Naive thymus-derived CD4-positive, alpha-beta T cell (primary cell): ENCODE measurements at regions of chr2 and their contacts with region 1.

Region 1: GRCh38 chr2:201780674-201781581 is at the start of gene ALS2:
- DNase-seq: peak; percentile 91 to 97 (median 95)
- ATAC-seq: peak; percentile 96
- H3K4me3 ChIP-seq: peak within 1 kb of the TSS; percentile 96
- H3K4me3 Mint-ChIP-seq: peak within 1 kb of the TSS; percentile 87 to 99 (median 98)
- H3K27ac ChIP-seq: peak within 1 kb of the TSS; percentile 84
- H3K27ac Mint-ChIP-seq: peak within 1 kb of the TSS; percentile 84 to 99 (median 97)
- H3K4me1 ChIP-seq: peaks cover 7 to 10% of the 10 kb centered on the region in 2 donors
- H3K4me1 Mint-ChIP-seq: peaks cover 5 to 36% (median 21%) of the 10 kb centered on the region in 7 donors
- H3K27me3 ChIP-seq: no peaks in the 10 kb centered on the region
- H3K27me3 Mint-ChIP-seq: peaks cover 0 to 22% (median 0%) of the 10 kb centered on the region in 5 donors
- total RNA-seq, gene ALS2: 8.9 to 13.5 (median 10.7) TPM

Region 2: GRCh38 chr2:200888704-200889625 is 892.0 kb before region 1 on chr2 and contains the starts of genes NIF3L1 and PPIL3:
- CTCF ChIA-PET with region 1: no interaction called
- POLR2A ChIA-PET with region 1: no interaction called
- intact Hi-C with region 1: loop called in 1 of 2 experiments (anchors 2 kb)
- DNase-seq: peak; percentile 88 to 97 (median 95)
- ATAC-seq: peak; percentile 89
- H3K4me3 ChIP-seq: peak within 1 kb of the TSS; percentile 83
- H3K4me3 Mint-ChIP-seq: peak within 1 kb of the TSS; percentile 88 to 100 (median 96)
- H3K27ac ChIP-seq: peak within 1 kb of the TSS; percentile 86
- H3K27ac Mint-ChIP-seq: peak within 1 kb of the TSS; percentile 97 to 100 (median 100)
- H3K4me1 ChIP-seq: peaks cover 23 to 26% of the 10 kb centered on the region in 2 donors
- H3K4me1 Mint-ChIP-seq: peaks cover 35 to 75% (median 60%) of the 10 kb centered on the region in 7 donors
- H3K27me3 ChIP-seq: no peaks in the 10 kb centered on the region
- H3K27me3 Mint-ChIP-seq: no peaks in the 10 kb centered on the region
- total RNA-seq, gene NIF3L1: 11.5 to 33.9 (median 31.4) TPM
- total RNA-seq, gene PPIL3: 28.5 to 69.7 (median 49.1) TPM

Region 3: DNA sequence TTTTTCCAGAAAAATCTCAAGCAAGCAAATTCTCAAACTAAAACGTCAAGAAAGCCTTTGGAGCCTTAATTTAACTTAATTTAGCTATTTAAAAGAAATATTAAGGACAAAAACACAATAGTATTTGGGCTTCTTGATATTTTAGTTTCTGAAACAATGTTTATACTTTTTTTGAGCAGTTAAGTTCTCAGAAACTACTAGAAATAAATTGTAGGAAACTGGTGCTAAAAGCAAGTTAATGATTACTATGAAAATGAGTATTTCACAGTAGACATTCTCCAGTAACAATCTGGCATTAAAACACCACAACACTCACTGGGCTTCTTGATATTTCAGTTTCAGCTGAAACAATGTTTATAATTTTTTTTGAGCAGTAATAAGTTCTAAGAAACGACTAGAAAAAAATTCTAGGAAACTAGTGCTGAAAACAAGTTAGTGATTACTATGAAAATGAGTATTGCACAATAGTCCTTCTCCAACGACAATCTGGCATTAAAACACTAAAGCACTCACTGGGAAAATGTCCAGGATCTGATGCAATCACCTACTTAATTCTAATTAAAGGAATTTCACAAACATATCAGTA is 374.8 kb before region 1 on chr2:
- CTCF ChIA-PET with region 1: no interaction called
- POLR2A ChIA-PET with region 1: no interaction called
- intact Hi-C with region 1: no loop called
- DNase-seq: no peak
- ATAC-seq: no peak
- H3K4me3 ChIP-seq: no peak overlapping the region
- H3K4me3 Mint-ChIP-seq: peak overlapping the region in 4 of 10 donors; percentile 19 to 54 (median 22)
- H3K27ac ChIP-seq: peak overlapping the region; percentile 36
- H3K27ac Mint-ChIP-seq: peak overlapping the region in 5 of 9 donors; percentile 16 to 81 (median 28)
- H3K4me1 ChIP-seq: peaks cover 0 to 21% of the 10 kb centered on the region in 2 donors
- H3K4me1 Mint-ChIP-seq: peaks cover 13 to 61% (median 50%) of the 10 kb centered on the region in 7 donors
- H3K27me3 ChIP-seq: no peaks in the 10 kb centered on the region
- H3K27me3 Mint-ChIP-seq: no peaks in the 10 kb centered on the region

Region 4: DNA sequence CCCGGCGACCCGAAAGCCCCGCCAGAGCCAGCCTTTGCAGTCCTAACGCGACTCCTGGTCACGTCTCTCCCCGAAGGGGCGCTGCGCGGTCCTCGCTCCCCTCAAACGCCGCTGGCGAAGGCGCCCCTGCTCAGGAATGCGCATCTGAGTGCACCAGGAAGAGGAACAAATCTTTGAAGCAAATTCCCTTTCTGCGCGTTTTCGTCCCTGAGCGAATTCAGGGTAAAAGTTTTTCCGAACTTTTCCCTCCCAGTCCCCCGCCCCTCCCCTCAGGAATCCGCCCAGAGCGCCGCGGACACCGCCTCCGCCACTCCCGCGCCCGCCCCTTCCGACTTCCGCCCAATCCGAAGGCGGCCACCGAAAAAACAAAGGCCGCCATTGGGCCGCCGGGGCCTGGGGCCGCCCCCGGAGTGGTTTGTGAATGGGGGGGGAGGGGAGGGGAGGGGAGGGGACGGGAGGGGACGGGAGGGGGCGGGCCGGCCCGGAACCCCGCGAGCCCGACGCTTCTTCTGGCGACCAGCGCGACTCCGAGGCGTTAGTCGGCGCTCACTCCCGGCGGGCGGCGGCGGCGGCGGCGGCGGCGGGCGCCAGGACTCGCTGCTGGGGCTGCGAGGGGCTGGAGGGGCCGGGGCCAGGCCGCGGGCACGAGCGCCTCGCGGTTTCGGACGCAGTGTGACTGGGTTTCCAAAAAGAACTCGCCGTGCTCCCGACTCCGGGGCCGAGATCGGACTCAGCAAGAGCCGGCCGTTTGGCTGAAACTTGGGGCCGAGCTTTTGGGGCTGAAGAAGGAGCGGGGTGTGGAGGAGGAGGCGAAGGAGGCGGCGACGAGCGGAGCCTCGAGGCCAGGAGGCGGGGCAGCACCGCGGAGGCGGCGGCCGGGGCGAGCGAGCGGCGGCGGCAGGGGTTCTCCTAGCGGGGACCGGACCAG is 252.7 kb after region 1 on chr2 and contains the start of gene FZD7:
- CTCF ChIA-PET with region 1: no interaction called
- POLR2A ChIA-PET with region 1: no interaction called
- intact Hi-C with region 1: loop called (anchors 1 kb)
- DNase-seq: peak; percentile 70 to 87 (median 81)
- ATAC-seq: peak; percentile 92
- H3K4me3 ChIP-seq: peak within 1 kb of the TSS; percentile 91
- H3K4me3 Mint-ChIP-seq: peak within 1 kb of the TSS in 9 of 10 donors; percentile 87 to 96 (median 92)
- H3K27ac ChIP-seq: peak within 1 kb of the TSS; percentile 44
- H3K27ac Mint-ChIP-seq: peak within 1 kb of the TSS in 8 of 9 donors; percentile 46 to 83 (median 72)
- H3K4me1 ChIP-seq: peaks cover 9 to 11% of the 10 kb centered on the region in 2 donors
- H3K4me1 Mint-ChIP-seq: peaks cover 6 to 17% (median 14%) of the 10 kb centered on the region in 7 donors
- H3K27me3 ChIP-seq: peaks cover 6 to 22% of the 10 kb centered on the region in 2 donors
- H3K27me3 Mint-ChIP-seq: peaks cover 0 to 45% (median 7%) of the 10 kb centered on the region in 5 donors
- total RNA-seq, gene FZD7: 0.27 to 0.99 (median 0.43) TPM

Region 5: GRCh38 chr2:202115479-202115971 is 334.6 kb after region 1 on chr2:
- CTCF ChIA-PET with region 1: no interaction called
- POLR2A ChIA-PET with region 1: no interaction called
- intact Hi-C with region 1: no loop called
- DNase-seq: no peak
- ATAC-seq: no peak
- H3K4me3 ChIP-seq: no peak overlapping the region
- H3K4me3 Mint-ChIP-seq: no peak overlapping the region
- H3K27ac ChIP-seq: no peak overlapping the region
- H3K27ac Mint-ChIP-seq: no peak overlapping the region
- H3K4me1 ChIP-seq: no peaks in the 10 kb centered on the region
- H3K4me1 Mint-ChIP-seq: no peaks in the 10 kb centered on the region
- H3K27me3 ChIP-seq: no peaks in the 10 kb centered on the region
- H3K27me3 Mint-ChIP-seq: peaks cover 13 to 39% (median 22%) of the 10 kb centered on the region in 5 donors

Region 6: GRCh38 chr2:202238234-202239197 is 457.6 kb after region 1 on chr2 and contains the start of gene SUMO1:
- CTCF ChIA-PET with region 1: no interaction called
- POLR2A ChIA-PET with region 1: no interaction called
- intact Hi-C with region 1: loop called in 1 of 2 experiments (anchors 1 kb)
- DNase-seq: peak; percentile 80 to 95 (median 93)
- ATAC-seq: peak; percentile 98
- H3K4me3 ChIP-seq: peak within 1 kb of the TSS; percentile 82
- H3K4me3 Mint-ChIP-seq: peak within 1 kb of the TSS; percentile 91 to 100 (median 97)
- H3K27ac ChIP-seq: peak within 1 kb of the TSS; percentile 88
- H3K27ac Mint-ChIP-seq: peak within 1 kb of the TSS; percentile 96 to 99 (median 97)
- H3K4me1 ChIP-seq: peaks cover 11% of the 10 kb centered on the region in 2 donors
- H3K4me1 Mint-ChIP-seq: peaks cover 10 to 51% (median 35%) of the 10 kb centered on the region in 7 donors
- H3K27me3 ChIP-seq: no peaks in the 10 kb centered on the region
- H3K27me3 Mint-ChIP-seq: peaks cover 0 to 2% (median 0%) of the 10 kb centered on the region in 5 donors
- total RNA-seq, gene SUMO1: 48.1 to 104 (median 56.8) TPM

Region 7: DNA sequence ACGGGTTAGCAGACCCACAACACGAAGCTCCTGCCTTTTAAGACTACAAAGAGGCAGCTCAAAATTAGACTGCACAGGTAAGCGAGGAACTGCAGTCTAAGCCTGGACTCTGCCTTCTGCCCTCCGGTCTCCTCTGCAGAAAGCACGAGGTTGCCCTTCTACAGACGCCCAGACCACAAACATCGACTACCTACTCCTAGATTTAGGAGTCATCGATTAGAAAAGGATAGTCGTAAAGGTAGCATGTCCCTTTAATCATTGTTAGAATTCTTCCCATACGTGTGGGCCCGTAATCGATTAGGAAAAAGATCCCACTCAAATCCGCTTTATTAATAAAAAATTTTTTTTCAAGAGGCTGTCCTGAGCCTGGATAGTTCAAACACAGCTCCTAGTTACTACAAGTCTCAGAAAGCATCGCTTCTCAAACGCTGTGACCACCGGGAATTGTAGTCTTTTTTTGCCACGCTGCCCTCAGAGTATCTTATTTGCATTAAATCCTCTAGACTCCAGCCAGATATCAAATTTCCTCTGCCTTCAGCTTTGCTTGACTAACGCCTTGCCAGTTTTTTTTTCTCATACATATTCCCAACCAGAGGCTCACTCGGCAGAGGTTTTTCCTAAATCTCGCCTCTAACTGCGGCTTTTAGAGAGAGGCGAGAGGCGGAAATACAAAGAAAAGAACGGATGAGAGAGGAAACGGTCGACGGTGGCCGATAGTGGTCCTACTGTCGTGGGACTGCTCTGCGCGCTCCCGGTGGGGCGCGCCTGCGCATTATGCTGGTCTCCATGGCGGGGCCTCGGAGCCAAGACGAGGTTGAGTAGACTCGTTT is 1130.8 kb after region 1 on chr2 and contains the starts of genes CARF and WDR12:
- CTCF ChIA-PET with region 1: no interaction called
- POLR2A ChIA-PET with region 1: no interaction called
- intact Hi-C with region 1: loop called in 1 of 2 experiments (anchors 5 kb)
- DNase-seq: peak; percentile 81 to 93 (median 89)
- ATAC-seq: peak; percentile 93
- H3K4me3 ChIP-seq: peak within 1 kb of the TSS; percentile 82
- H3K4me3 Mint-ChIP-seq: peak within 1 kb of the TSS; percentile 90 to 100 (median 98)
- H3K27ac ChIP-seq: peak within 1 kb of the TSS; percentile 79
- H3K27ac Mint-ChIP-seq: peak within 1 kb of the TSS; percentile 93 to 99 (median 97)
- H3K4me1 ChIP-seq: peaks cover 4 to 11% of the 10 kb centered on the region in 2 donors
- H3K4me1 Mint-ChIP-seq: peaks cover 24 to 50% (median 34%) of the 10 kb centered on the region in 7 donors
- H3K27me3 ChIP-seq: no peaks in the 10 kb centered on the region
- H3K27me3 Mint-ChIP-seq: no peaks in the 10 kb centered on the region
- total RNA-seq, gene CARF: 10.2 to 31.2 (median 15.4) TPM
- total RNA-seq, gene WDR12: 17.2 to 50.4 (median 20.8) TPM

Region 8: DNA sequence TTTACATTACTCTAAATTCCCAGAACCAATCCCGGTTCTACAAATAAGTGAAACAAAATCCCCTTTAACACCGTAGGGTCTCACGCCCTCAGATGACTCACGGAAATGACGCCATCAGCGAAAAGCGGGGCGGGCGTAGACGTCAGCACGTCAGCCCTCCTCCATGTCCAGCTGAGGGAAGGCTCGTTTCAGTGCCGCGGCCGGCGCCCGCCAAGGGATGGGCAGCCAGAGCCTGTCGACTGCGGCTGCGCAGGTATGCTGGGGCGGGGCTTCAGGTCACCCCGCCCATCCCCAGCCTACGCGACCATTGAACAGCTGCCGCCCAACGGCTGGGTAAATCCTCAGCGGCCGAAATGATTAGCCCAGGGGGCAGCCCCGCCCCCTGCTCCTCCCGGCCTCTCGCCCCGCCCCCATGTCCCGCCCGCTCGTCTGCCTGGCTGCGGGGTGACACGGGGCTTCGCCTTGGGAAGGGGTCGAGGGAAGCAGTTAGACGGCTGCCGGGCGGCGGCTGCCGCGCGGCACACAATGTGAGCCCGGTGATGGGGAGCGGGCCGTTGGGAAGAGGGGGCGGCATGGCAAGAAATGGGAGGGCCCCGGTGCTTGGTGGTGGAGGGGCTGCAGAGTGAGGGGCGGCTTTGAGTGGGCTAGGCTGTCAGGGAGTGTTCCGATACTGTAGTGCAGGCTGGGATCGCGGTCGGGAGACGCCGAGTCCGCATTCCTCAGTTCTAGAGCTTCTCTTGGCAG is 1233.7 kb after region 1 on chr2 and contains the start of gene NBEAL1:
- CTCF ChIA-PET with region 1: no interaction called
- POLR2A ChIA-PET with region 1: no interaction called
- intact Hi-C with region 1: loop called in 1 of 2 experiments (anchors 2 kb)
- DNase-seq: peak; percentile 88 to 99 (median 90)
- ATAC-seq: peak; percentile 95
- H3K4me3 ChIP-seq: peak within 1 kb of the TSS; percentile 92
- H3K4me3 Mint-ChIP-seq: peak within 1 kb of the TSS; percentile 90 to 97 (median 95)
- H3K27ac ChIP-seq: peak within 1 kb of the TSS; percentile 92
- H3K27ac Mint-ChIP-seq: peak within 1 kb of the TSS; percentile 84 to 98 (median 94)
- H3K4me1 ChIP-seq: peaks cover 5 to 14% of the 10 kb centered on the region in 2 donors
- H3K4me1 Mint-ChIP-seq: peaks cover 18 to 48% (median 41%) of the 10 kb centered on the region in 7 donors
- H3K27me3 ChIP-seq: no peaks in the 10 kb centered on the region
- H3K27me3 Mint-ChIP-seq: peaks cover 0 to 19% (median 0%) of the 10 kb centered on the region in 5 donors
- total RNA-seq, gene NBEAL1: 11.6 to 15.9 (median 12.6) TPM